ENCODE measurements at regions of chr7 and their contacts with region 1.

Region 1: GRCh38 chr7:36005293-36005692 is 147.8 kb upstream of the EEPD1 start:
- DNase-seq: no peak
- H3K4me3 ChIP-seq: no peak overlapping the region
- H3K27ac ChIP-seq: no peak overlapping the region
- H3K4me1 ChIP-seq: no peaks in the 10 kb centered on the region
- H3K27me3 ChIP-seq: no peaks in the 10 kb centered on the region
- CTCF ChIP-seq: no peak

Region 2: DNA sequence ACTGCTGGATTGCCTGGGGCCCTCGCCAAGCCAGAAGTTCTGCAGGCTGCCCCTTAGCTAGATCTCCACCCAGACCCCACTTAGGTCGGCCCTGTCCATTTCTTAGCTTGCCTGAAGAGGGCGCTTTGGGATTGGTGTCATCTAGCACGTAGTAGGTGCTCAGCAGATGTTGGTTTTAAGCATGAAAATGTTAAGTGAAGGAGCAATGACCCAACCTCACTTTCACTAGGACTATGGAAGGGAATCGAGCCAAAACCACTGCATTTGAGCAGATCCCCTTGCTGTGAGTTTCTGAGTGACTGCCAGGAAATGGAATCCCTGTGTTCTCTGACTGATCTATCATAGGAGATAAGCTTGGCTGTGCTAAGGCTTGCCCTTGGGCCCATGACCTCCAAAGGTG is 16.1 kb after region 1 on chr7:
- CTCF ChIA-PET with region 1: no interaction called
- dilution Hi-C with region 1: no loop called
- in situ Hi-C with region 1: no loop called
- intact Hi-C with region 1: no loop called
- DNase-seq: no peak
- H3K4me3 ChIP-seq: no peak overlapping the region
- H3K27ac ChIP-seq: no peak overlapping the region
- H3K4me1 ChIP-seq: no peaks in the 10 kb centered on the region
- H3K27me3 ChIP-seq: no peaks in the 10 kb centered on the region
- CTCF ChIP-seq: peak; percentile 40 to 59

Region 3: DNA sequence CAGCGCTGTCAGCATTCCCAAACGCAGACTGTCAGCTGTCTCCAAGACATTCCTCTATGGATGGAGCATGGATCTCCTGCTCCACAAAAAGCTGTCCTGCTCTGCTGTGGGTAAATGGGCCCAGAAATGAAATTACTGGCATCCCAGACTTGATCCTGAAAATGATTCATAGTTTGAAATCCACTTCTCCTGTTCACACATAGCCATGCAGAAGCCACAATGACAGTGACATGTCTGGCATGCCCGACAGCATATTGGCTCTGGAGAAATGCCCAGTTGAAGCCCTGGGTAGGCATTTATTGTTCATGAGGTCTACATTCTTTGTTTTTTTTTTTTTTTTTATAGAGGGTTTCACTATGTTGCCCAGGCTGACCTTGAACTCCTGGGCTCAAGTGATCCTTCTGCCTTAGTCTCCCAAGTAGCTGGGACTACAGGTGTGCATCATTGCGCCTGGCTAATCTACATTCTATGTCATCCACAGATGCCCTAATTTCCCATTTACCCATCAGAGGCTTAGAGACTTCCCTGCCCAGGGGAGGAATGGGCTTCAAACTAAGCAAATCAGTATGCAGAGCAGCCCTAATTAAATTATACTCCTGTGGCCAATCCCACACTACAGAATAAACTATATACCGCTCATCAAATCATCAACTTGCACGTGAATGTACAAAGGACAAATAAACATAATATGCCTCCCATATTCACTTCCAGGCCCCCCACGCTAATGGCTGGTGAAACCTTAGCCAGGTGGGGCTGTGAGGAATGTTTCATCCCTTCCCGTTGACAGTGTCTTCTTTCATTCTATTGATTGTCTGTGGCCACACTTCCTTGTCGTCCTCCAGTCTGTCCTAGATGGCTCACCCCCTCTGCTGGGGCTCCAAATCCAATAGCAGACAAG is 85.9 kb after region 1 on chr7:
- CTCF ChIA-PET with region 1: no interaction called
- dilution Hi-C with region 1: loop called (anchors 5 kb)
- in situ Hi-C with region 1: no loop called
- intact Hi-C with region 1: no loop called
- DNase-seq: no peak
- H3K4me3 ChIP-seq: no peak overlapping the region
- H3K27ac ChIP-seq: no peak overlapping the region
- H3K4me1 ChIP-seq: no peaks in the 10 kb centered on the region
- H3K27me3 ChIP-seq: no peaks in the 10 kb centered on the region
- CTCF ChIP-seq: no peak

Measured in mammary epithelial cell (primary cell).